ENCODE measurements at regions of chr16 and their contacts with region 1.

Region 1: DNA sequence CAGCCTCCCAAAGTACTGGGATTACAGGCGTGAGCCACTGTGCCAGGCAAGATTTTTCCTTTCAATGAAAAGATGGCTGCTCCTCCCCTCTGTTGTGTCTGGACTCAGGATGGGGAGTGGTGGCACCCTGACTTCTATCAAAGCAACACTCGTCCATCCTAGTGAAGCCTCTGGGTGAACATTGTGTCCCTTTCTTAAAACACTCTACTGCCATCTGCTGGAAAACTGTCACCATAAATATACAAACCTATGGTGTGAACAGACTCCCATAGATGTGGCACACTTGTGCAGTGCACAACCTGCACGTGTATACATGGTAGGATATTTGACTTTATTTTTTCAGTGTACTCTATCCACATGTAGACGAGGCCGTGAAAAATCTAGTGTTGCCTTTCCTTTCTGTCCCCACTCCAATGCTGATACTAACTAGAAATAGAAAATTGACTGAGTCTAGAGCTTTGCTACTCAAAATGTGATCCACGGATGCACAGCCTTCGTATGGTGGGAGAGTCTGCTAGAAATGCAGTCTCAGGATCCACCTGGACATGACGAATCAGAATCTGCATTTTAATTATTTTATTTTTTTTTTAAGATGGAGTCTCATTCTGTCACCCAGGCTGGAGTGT is 55.9 kb upstream of the PLCG2 start:
- DNase-seq: peak; percentile 57 to 71 (median 67)
- H3K4me3 ChIP-seq: no peak overlapping the region
- H3K4me3 Mint-ChIP-seq: no peak overlapping the region
- H3K27ac ChIP-seq: no peak overlapping the region
- H3K27ac Mint-ChIP-seq: no peak overlapping the region
- H3K4me1 ChIP-seq: peaks cover 10% of the 10 kb centered on the region in 2 donors
- H3K4me1 Mint-ChIP-seq: peaks cover 14% of the 10 kb centered on the region
- H3K27me3 ChIP-seq: no peaks in the 10 kb centered on the region
- H3K27me3 Mint-ChIP-seq: peaks cover 0 to 10% (median 4%) of the 10 kb centered on the region in 3 donors
- CTCF ChIP-seq: peak; percentile 80

Region 2: GRCh38 chr16:81623363-81624102 is 99.7 kb before region 1 on chr16:
- intact Hi-C with region 1: loop called in 1 of 2 experiments (anchors 1 kb)
- DNase-seq: peak; percentile 31 to 49 (median 48)
- H3K4me3 ChIP-seq: no peak overlapping the region
- H3K4me3 Mint-ChIP-seq: no peak overlapping the region
- H3K27ac ChIP-seq: peak overlapping the region in 1 of 2 donors; percentile 38
- H3K27ac Mint-ChIP-seq: peak overlapping the region in 4 of 7 donors; percentile 30 to 75 (median 60)
- H3K4me1 ChIP-seq: no peaks in the 10 kb centered on the region
- H3K4me1 Mint-ChIP-seq: peaks cover 1% of the 10 kb centered on the region
- H3K27me3 ChIP-seq: no peaks in the 10 kb centered on the region
- H3K27me3 Mint-ChIP-seq: peaks cover 0 to 2% (median 0%) of the 10 kb centered on the region in 3 donors
- CTCF ChIP-seq: peak; percentile 66

Region 3: DNA sequence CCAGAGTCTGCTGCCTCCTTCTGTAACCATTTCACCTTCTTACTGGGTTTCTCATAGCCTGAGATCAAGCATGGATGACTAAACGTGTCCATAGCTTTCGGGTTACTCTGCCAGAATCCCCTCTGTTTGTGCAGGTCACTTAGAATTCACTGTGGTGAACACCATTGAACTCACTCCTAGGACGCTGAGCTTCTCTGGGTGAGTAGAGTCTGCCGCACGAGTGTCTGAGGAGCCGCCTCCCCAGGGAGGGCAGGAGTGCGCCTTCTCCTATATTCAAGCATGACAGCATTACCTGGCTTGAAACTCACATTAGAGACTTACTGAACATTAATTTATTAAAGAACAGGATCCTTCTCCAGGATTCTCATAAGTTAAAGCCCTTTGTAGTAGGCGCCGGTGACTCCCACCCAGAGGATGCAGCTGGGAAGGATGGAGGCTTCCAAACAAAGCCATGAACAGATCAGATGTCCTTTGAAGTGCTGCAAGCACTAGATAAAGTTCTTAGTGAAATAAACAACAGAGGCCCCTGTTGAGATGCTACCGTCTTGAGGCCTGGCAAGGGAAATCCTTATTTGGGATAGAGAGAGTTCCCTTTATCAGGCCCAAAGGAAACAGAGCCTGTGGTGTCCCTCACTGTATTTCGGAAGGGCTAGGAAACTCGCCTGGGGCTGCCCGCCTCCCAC is 88.7 kb before region 1 on chr16:
- intact Hi-C with region 1: no loop called
- DNase-seq: no peak
- H3K4me3 ChIP-seq: no peak overlapping the region
- H3K4me3 Mint-ChIP-seq: no peak overlapping the region
- H3K27ac ChIP-seq: peak overlapping the region in 1 of 2 donors; percentile 34
- H3K27ac Mint-ChIP-seq: peak overlapping the region in 5 of 7 donors; percentile 41 to 93 (median 79)
- H3K4me1 ChIP-seq: peaks cover 25 to 40% of the 10 kb centered on the region in 2 donors
- H3K4me1 Mint-ChIP-seq: peaks cover 67% of the 10 kb centered on the region
- H3K27me3 ChIP-seq: no peaks in the 10 kb centered on the region
- H3K27me3 Mint-ChIP-seq: peaks cover 0 to 5% (median 3%) of the 10 kb centered on the region in 3 donors
- CTCF ChIP-seq: no peak

Region 4: DNA sequence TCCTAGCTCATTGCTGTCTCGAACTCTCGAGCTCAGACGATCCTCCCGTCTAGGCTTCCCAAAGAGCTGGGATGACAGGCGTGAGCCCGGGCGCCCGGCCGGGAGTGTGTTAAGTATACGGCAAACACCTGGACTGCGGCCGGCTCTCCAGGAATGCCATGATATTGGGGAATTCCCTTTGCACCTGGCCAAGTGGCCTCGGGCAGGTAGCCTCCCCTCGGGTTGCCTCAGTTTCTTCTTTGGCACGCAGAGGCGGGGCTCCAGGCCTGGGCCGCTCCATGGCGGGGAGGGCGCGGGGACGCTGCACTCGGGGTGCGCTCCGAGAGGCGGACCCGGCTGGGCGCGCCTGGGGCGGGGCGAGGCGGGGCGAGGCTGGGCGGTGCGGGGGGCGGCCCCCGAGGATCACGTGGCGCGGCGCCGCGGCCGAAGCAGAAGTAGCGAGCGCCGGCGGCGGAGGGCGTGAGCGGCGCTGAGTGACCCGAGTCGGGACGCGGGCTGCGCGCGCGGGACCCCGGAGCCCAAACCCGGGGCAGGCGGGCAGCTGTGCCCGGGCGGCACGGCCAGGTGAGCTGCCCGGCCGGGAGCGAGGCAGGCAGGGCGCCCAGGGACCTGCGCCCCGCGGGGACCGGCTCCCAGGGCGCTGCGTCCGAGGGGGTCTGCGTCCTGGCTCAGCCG is 55.8 kb after region 1 on chr16 and contains the start of gene PLCG2:
- intact Hi-C with region 1: no loop called
- DNase-seq: peak; percentile 71 to 81 (median 76)
- H3K4me3 ChIP-seq: peak within 1 kb of the TSS; percentile 82 to 94 (median 89)
- H3K4me3 Mint-ChIP-seq: peak within 1 kb of the TSS; percentile 96 to 97
- H3K27ac ChIP-seq: peak within 1 kb of the TSS; percentile 52 to 93
- H3K27ac Mint-ChIP-seq: peak within 1 kb of the TSS; percentile 89 to 96 (median 92)
- H3K4me1 ChIP-seq: peaks cover 35 to 45% of the 10 kb centered on the region in 2 donors
- H3K4me1 Mint-ChIP-seq: peaks cover 54% of the 10 kb centered on the region
- H3K27me3 ChIP-seq: no peaks in the 10 kb centered on the region
- H3K27me3 Mint-ChIP-seq: peaks cover 2 to 5% (median 2%) of the 10 kb centered on the region in 3 donors
- CTCF ChIP-seq: no peak
- polyA plus RNA-seq, gene PLCG2: 19.5 to 47.4 (median 35.5) TPM

Region 5: GRCh38 chr16:81808933-81809496 is 85.8 kb after region 1 on chr16:
- intact Hi-C with region 1: no loop called
- DNase-seq: no peak
- H3K4me3 ChIP-seq: no peak overlapping the region
- H3K4me3 Mint-ChIP-seq: peak overlapping the region in 1 of 2 donors; percentile 58
- H3K27ac ChIP-seq: peak overlapping the region in 1 of 2 donors; percentile 49
- H3K27ac Mint-ChIP-seq: peak overlapping the region; percentile 1 to 89 (median 38)
- H3K4me1 ChIP-seq: peaks cover 33 to 49% of the 10 kb centered on the region in 2 donors
- H3K4me1 Mint-ChIP-seq: peaks cover 76% of the 10 kb centered on the region
- H3K27me3 ChIP-seq: no peaks in the 10 kb centered on the region
- H3K27me3 Mint-ChIP-seq: peaks cover 0 to 2% (median 0%) of the 10 kb centered on the region in 3 donors
- CTCF ChIP-seq: no peak

Measured in CD14-positive monocyte (primary cell).